CD8-positive, alpha-beta T cell (primary cell): ENCODE measurements at regions of chr2 and their contacts with region 1.

Region 1: DNA sequence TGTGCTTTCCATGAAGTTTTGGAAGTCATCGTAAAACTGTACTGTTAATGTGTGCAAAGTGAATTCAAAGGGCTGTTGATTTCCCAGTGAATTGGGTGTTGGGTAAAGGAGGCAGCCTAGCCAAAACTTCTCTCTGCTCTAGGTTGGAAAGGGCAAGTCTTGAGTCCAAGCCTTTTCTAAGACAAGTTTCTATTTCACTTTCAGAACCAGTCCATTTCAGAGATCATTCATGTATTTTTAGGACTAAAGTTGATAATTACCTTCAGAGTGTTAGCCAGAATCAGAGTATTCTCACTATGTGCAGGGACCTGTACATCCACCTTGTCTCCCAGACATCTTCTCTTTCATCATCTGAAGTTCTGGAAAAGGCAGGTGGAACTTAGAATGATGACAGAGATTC is 636.1 kb upstream of the KLHL29 start:
- DNase-seq: no peak
- ATAC-seq: no peak
- H3K4me3 ChIP-seq: no peak overlapping the region
- H3K4me3 Mint-ChIP-seq: no peak overlapping the region
- H3K27ac ChIP-seq: no peak overlapping the region
- H3K27ac Mint-ChIP-seq: no peak overlapping the region
- H3K4me1 ChIP-seq: no peaks in the 10 kb centered on the region
- H3K4me1 Mint-ChIP-seq: no peaks in the 10 kb centered on the region
- H3K27me3 ChIP-seq: no peaks in the 10 kb centered on the region
- H3K27me3 Mint-ChIP-seq: no peaks in the 10 kb centered on the region
- CTCF ChIP-seq: no peak

Region 2: GRCh38 chr2:22777484-22777883 is 28.6 kb after region 1 on chr2:
- CTCF ChIA-PET with region 1: no interaction called
- POLR2A ChIA-PET with region 1: no interaction called
- intact Hi-C with region 1: loop called in 1 of 2 experiments (anchors 1 kb)
- DNase-seq: no peak
- ATAC-seq: no peak
- H3K4me3 ChIP-seq: no peak overlapping the region
- H3K4me3 Mint-ChIP-seq: no peak overlapping the region
- H3K27ac ChIP-seq: no peak overlapping the region
- H3K27ac Mint-ChIP-seq: no peak overlapping the region
- H3K4me1 ChIP-seq: no peaks in the 10 kb centered on the region
- H3K4me1 Mint-ChIP-seq: no peaks in the 10 kb centered on the region
- H3K27me3 ChIP-seq: no peaks in the 10 kb centered on the region
- H3K27me3 Mint-ChIP-seq: no peaks in the 10 kb centered on the region
- CTCF ChIP-seq: no peak